Activated CD4-positive, alpha-beta memory T cell treated with anti-CD3 and anti-CD28 coated beads for 36 hours (primary cell): ENCODE measurements at regions of chr11 and their contacts with region 1.

Region 1: DNA sequence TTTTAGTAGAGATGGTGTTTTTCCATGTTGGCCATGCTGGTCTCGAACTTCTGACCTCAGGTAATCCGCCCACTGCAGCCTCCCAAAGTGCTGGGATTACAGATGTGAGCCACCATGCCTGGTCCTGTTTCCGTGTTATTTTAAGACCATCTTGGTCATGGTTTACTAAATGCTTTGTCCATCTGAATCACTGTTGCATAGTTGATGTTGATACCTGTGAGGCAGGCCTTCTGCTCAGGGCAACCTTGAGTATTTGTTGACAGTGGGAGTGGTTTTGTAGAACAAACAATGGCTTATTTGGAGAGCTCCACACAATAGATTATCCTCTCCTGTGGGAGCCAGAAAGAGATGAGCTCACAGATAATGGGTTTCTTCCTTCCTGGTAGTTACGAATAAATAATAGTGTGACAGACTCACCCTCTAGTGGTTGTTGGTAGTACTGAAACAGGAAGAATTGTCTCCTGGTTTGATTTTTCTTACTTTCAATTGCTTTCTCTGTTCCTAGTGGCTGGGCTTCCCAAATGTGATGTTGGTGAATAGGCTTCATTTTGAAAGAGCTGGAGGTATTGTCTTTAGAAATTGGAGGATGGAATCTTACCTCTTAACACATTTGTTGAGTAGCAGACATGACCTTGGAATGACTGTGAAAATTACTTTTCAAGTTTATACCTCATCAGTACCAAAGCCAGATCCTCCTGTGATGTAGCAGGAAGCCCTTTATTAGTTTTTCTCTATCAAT is 39.0 kb downstream of the CTNND1 start:
- DNase-seq: no peak
- H3K4me3 Mint-ChIP-seq: no peak overlapping the region
- H3K27ac Mint-ChIP-seq: peak overlapping the region; percentile 19
- H3K4me1 Mint-ChIP-seq: peaks cover 23% of the 10 kb centered on the region
- H3K27me3 Mint-ChIP-seq: no peaks in the 10 kb centered on the region

Region 2: GRCh38 chr11:57493507-57494503 is 306.8 kb before region 1 on chr11:
- CTCF ChIA-PET with region 1: interaction called, 14 read pairs
- POLR2A ChIA-PET with region 1: no interaction called
- intact Hi-C with region 1: no loop called
- DNase-seq: peak; percentile 87
- H3K4me3 Mint-ChIP-seq: no peak overlapping the region
- H3K27ac Mint-ChIP-seq: peak overlapping the region; percentile 83
- H3K4me1 Mint-ChIP-seq: peaks cover 9% of the 10 kb centered on the region
- H3K27me3 Mint-ChIP-seq: no peaks in the 10 kb centered on the region

Region 3: DNA sequence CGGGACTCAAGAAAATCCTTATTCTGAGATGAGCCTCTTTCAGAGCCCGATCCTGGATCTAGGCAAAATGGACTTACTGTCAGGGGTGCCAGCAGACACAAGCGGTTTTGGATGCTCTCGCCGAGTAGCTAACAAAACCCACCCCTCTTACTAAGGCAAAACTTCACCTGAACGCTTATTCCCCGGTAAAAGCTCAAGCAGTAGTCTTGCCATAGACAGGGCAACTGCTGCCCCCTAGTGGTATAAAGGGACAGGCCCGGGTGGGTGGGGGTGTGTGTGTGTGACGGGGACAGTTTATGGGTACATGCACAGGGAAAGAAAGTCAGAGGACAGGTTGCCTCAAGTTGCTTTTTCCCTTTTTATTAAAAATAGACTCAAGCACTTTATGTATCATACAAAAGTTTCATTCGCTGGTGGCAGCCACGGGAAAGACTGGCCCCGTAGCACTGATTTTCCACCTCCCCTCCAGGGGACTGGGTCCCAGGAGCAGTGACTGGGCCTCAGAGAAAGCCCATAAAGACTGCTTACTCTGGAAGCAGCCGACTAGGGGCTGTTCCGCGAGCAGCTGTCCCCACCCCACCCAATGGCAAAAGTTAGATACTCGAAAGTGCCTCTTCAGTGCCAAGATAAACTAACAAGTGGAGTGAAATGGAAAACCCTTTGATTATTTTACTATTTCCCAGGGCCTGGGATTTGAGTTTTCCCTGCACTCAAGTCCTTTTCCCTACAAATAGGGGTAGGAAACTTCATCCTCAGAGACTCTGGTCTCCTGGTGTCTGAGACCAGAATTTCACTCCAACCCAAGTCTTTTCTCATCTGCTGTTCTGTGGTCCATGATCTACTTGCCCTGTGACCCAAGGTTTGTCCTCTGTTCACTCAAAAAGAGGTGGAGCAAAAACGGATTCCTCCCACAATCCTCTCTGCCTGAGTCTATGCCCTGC is 155.6 kb before region 1 on chr11:
- CTCF ChIA-PET with region 1: interaction called, 25 read pairs
- POLR2A ChIA-PET with region 1: no interaction called
- intact Hi-C with region 1: loop called (anchors 2 kb)
- DNase-seq: peak; percentile 90
- H3K4me3 Mint-ChIP-seq: no peak overlapping the region
- H3K27ac Mint-ChIP-seq: no peak overlapping the region
- H3K4me1 Mint-ChIP-seq: peaks cover 36% of the 10 kb centered on the region
- H3K27me3 Mint-ChIP-seq: peaks cover 42% of the 10 kb centered on the region

Region 4: DNA sequence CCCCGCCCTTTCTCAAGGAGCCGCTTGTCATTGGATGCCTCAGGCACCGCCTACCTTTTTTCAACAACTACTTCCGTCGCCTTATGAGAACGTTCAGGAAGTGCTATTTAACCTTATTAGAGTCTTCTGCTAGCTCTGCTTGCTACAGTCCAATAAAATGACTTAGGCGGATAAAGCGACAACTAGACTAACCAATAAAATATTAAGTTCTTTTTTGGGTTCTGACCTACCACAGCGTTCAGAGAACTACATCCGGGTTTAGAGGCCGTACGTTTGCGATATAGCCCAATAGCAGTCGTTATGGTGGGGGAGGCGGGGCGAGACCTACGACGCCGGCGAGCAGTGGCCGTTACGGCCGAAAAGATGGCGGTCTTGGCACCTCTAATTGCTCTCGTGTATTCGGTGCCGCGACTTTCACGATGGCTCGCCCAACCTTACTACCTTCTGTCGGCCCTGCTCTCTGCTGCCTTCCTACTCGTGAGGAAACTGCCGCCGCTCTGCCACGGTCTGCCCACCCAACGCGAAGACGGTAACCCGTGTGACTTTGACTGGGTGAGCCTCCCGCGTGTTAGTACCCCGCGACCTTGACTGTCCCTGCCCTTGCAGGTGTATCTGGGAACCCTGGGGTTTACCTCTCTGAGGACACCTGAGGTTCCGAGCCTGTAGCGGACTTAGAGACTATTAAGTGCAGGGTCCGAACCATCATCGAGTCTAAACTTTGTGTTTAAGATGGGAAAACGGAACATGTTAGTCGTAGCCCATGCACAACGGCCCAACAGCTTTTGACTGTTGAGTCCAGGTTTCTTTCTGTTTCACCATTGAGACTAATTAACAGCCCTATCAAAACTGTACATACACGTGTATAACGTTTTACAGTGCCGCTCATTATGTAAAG is 88.1 kb before region 1 on chr11 and contains the start of gene TMX2:
- CTCF ChIA-PET with region 1: interaction called, 20 read pairs
- POLR2A ChIA-PET with region 1: no interaction called
- intact Hi-C with region 1: loop called (anchors 1 kb)
- DNase-seq: peak; percentile 94
- H3K4me3 Mint-ChIP-seq: peak within 1 kb of the TSS; percentile 94
- H3K27ac Mint-ChIP-seq: peak within 1 kb of the TSS; percentile 89
- H3K4me1 Mint-ChIP-seq: peaks cover 53% of the 10 kb centered on the region
- H3K27me3 Mint-ChIP-seq: no peaks in the 10 kb centered on the region
- total RNA-seq, gene TMX2: 54.9 to 57.2 TPM

Region 5: GRCh38 chr11:57751676-57752253 is 48.8 kb before region 1 on chr11 and contains the start of gene BTBD18:
- CTCF ChIA-PET with region 1: interaction called, 42 read pairs
- POLR2A ChIA-PET with region 1: no interaction called
- intact Hi-C with region 1: loop called (anchors 1 kb)
- DNase-seq: no peak
- H3K4me3 Mint-ChIP-seq: no peak within 1 kb of the TSS
- H3K27ac Mint-ChIP-seq: no peak within 1 kb of the TSS
- H3K4me1 Mint-ChIP-seq: peaks cover 5% of the 10 kb centered on the region
- H3K27me3 Mint-ChIP-seq: no peaks in the 10 kb centered on the region
- total RNA-seq, gene BTBD18: not detected

Region 6: DNA sequence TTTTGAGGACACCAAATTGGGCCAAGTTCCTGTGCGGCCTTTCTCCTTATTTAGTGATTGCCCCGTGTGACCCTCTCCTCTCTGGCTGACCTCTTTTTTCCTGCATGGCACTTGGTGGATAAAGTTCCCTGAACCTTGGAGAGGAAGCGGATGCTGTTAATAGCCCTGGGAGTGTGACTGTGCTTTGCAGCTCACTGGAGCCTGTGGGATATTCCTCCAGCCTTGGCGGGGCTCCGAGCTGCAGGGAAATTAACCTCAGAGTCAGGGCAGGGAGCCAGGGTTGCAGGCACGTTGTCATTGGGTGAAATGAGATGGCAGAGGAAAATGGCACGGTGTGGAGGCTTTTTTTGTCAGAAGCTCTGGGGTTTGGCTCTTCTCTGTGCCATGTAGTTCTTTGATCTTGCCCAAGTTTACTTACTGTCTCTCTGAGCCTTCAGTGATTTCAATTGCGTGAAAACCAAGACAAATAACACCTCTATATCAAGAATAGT is 224.0 kb after region 1 on chr11:
- CTCF ChIA-PET with region 1: no interaction called
- POLR2A ChIA-PET with region 1: no interaction called
- intact Hi-C with region 1: no loop called
- DNase-seq: no peak
- H3K4me3 Mint-ChIP-seq: no peak overlapping the region
- H3K27ac Mint-ChIP-seq: no peak overlapping the region
- H3K4me1 Mint-ChIP-seq: no peaks in the 10 kb centered on the region
- H3K27me3 Mint-ChIP-seq: no peaks in the 10 kb centered on the region